ENCODE measurements at regions of chr16 and their contacts with region 1.

Region 1: GRCh38 chr16:77807-78443 is at the start of gene MPG:
- DNase-seq: peak; percentile 86
- ATAC-seq: peak; percentile 88
- H3K4me3 Mint-ChIP-seq: peak within 1 kb of the TSS; percentile 91
- H3K27ac Mint-ChIP-seq: peak within 1 kb of the TSS; percentile 88
- H3K4me1 Mint-ChIP-seq: peaks cover 35% of the 10 kb centered on the region
- H3K27me3 Mint-ChIP-seq: peaks cover 9% of the 10 kb centered on the region
- CTCF ChIP-seq: no peak
- total RNA-seq, gene MPG: 51.7 and 53.6 TPM in 2 replicates

Region 2: DNA sequence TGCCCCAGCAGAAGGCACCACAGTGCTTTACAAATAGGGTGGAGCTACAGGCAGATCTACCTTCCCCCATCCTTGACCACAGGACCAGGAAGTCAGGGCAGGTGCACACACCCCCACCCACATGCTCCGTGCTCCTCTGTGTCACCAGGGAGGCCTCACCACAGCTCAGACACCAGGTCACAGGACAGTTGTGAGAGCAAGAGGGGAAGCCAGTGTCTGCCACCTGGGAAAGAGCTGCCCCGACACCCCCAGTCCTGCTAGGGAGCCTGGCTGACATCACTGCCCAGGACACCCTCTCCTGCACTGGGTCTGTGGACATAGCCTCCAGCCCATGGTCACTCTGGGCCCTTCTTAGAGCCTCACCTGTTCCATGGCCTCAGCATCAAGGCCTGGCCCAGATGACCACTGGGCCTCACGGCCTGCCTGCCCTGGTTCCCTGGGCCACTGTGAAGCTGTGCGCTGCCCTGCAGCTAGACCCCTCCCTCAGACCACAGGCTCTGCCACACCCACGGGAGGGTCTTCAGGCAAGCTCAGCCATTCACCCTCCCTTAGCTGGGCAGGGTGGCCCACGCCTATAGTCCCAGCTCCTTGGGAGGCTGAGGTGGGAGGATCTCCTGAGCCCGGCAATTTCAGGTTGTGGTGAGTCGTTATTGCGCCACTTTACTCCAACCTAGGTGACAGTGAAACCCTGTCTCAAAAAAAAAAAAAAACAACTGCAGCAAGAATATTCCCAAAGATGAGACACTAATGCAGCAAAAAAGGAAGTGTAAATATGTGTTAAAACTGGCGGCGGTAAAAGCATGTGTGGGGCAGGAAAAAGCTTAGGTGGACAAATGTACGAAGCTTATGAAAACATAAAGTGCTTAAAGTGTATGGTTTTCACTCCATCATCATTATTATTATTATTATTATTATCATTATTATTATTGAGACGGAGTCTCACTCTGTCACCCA is 38.7 kb before region 1 on chr16:
- CTCF ChIA-PET with region 1: no interaction called
- POLR2A ChIA-PET with region 1: interaction called, 16 read pairs
- intact Hi-C with region 1: no loop called
- DNase-seq: peak; percentile 61
- ATAC-seq: peak; percentile 86
- H3K4me3 Mint-ChIP-seq: peak overlapping the region; percentile 57
- H3K27ac Mint-ChIP-seq: peak overlapping the region; percentile 95
- H3K4me1 Mint-ChIP-seq: peaks cover 65% of the 10 kb centered on the region
- H3K27me3 Mint-ChIP-seq: no peaks in the 10 kb centered on the region
- CTCF ChIP-seq: no peak

Region 3: DNA sequence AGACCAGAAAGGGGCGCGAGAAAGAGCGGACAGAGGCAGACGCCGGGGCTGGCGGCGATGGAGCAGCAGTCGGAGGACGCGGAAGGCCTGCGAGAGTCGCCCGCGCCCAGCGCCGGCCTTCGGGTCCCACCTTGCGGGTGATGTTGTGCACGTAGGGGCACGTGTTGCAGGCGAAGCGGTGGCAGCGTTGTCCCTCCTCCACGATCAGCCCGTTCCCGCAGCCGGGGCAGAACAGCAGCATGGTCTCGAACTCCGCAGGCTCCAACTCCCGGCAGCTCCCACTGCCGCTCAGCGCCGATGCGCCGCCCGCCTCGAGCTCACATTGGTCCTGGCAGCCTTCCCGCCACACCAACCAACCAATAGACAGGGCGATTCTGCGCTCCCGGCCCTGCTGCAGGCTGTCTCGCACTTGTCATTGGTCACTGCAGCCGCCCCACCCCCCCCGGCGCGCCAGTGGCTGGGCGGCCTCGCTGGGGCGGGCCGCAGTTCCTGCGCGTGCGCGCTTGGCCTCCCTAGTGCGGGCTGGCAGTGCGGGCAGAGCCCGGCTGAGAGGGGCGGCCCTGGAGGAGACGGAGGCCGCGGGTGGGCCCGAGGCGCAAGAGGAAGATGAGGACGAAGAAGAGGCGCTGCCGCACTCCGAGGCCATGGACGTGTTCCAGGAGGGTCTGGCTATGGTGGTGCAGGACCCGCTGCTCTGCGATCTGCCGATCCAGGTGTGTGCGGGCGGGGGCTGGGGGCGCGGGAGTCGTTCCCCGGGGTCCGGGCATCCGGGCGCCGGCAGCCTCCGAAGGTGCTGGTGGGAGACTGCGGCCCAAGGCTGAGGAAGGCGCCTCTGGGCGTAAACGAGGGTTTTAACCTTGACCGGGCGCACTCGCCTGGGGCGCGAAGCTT is 24.3 kb before region 1 on chr16 and contains the starts of genes POLR3K and SNRNP25:
- CTCF ChIA-PET with region 1: no interaction called
- POLR2A ChIA-PET with region 1: interaction called, 12 read pairs
- intact Hi-C with region 1: loop called (anchors 1 kb)
- DNase-seq: peak; percentile 88
- ATAC-seq: peak; percentile 96
- H3K4me3 Mint-ChIP-seq: peak within 1 kb of the TSS; percentile 95
- H3K27ac Mint-ChIP-seq: peak within 1 kb of the TSS; percentile 88
- H3K4me1 Mint-ChIP-seq: peaks cover 27% of the 10 kb centered on the region
- H3K27me3 Mint-ChIP-seq: no peaks in the 10 kb centered on the region
- CTCF ChIP-seq: no peak
- total RNA-seq, gene POLR3K: 26.5 and 30.6 TPM in 2 replicates
- total RNA-seq, gene SNRNP25: 34.9 and 36.6 TPM in 2 replicates

Region 4: GRCh38 chr16:96935-97381 is 19.0 kb after region 1 on chr16:
- CTCF ChIA-PET with region 1: interaction called, 32 read pairs
- POLR2A ChIA-PET with region 1: interaction called, 11 read pairs
- intact Hi-C with region 1: no loop called
- DNase-seq: peak; percentile 89
- ATAC-seq: peak; percentile 99
- H3K4me3 Mint-ChIP-seq: no peak overlapping the region
- H3K27ac Mint-ChIP-seq: no peak overlapping the region
- H3K4me1 Mint-ChIP-seq: peaks cover 6% of the 10 kb centered on the region
- H3K27me3 Mint-ChIP-seq: no peaks in the 10 kb centered on the region
- CTCF ChIP-seq: peak; percentile 70

Region 5: DNA sequence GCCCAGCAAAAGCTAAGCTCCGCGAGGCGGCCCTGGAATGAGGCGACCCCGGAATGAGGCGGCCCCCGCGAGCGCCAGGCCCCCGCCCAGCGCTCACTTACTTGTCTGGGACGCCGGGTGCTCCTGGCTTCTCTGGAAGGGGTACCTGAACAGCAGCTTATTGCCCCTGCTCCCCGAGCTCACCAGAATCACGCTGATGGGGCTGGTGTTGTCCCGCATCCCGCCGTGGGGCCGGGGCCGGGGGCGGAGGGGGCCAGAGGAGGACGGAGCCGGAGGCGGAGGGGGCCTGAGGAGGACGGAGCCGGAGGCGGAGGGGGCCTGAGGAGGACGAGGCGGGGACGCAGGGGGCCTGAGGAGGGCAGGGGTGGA is 60.1 kb after region 1 on chr16:
- CTCF ChIA-PET with region 1: no interaction called
- POLR2A ChIA-PET with region 1: interaction called, 3 read pairs
- intact Hi-C with region 1: loop called (anchors 2 kb)
- DNase-seq: peak; percentile 39
- ATAC-seq: peak; percentile 23
- H3K4me3 Mint-ChIP-seq: peak overlapping the region; percentile 78
- H3K27ac Mint-ChIP-seq: peak overlapping the region; percentile 50
- H3K4me1 Mint-ChIP-seq: peaks cover 11% of the 10 kb centered on the region
- H3K27me3 Mint-ChIP-seq: no peaks in the 10 kb centered on the region
- CTCF ChIP-seq: no peak